ENCODE measurements at regions of chr10 and their contacts with region 1.

Region 1: GRCh38 chr10:32445740-32446535 is at the start of gene CCDC7:
- DNase-seq: peak; percentile 78 to 90 (median 88)
- ATAC-seq: peak; percentile 98
- H3K4me3 ChIP-seq: peak within 1 kb of the TSS; percentile 79
- H3K4me3 Mint-ChIP-seq: peak within 1 kb of the TSS; percentile 85 to 98 (median 94)
- H3K27ac ChIP-seq: peak within 1 kb of the TSS; percentile 95
- H3K27ac Mint-ChIP-seq: peak within 1 kb of the TSS; percentile 96 to 100 (median 99)
- H3K4me1 ChIP-seq: peaks cover 8 to 9% of the 10 kb centered on the region in 2 donors
- H3K4me1 Mint-ChIP-seq: peaks cover 2 to 35% (median 25%) of the 10 kb centered on the region in 7 donors
- H3K27me3 ChIP-seq: no peaks in the 10 kb centered on the region
- H3K27me3 Mint-ChIP-seq: peaks cover 0 to 4% (median 0%) of the 10 kb centered on the region in 5 donors
- total RNA-seq, gene CCDC7: 19.5 to 98.7 (median 69.5) TPM

Region 2: GRCh38 chr10:31031558-31032257 is 1414.2 kb before region 1 on chr10 and contains the start of gene ZNF438:
- CTCF ChIA-PET with region 1: no interaction called
- POLR2A ChIA-PET with region 1: no interaction called
- intact Hi-C with region 1: loop called in 1 of 2 experiments (anchors 5 kb)
- DNase-seq: peak; percentile 93 to 99 (median 96)
- ATAC-seq: peak; percentile 92
- H3K4me3 ChIP-seq: peak within 1 kb of the TSS; percentile 84
- H3K4me3 Mint-ChIP-seq: peak within 1 kb of the TSS; percentile 89 to 94 (median 92)
- H3K27ac ChIP-seq: peak within 1 kb of the TSS; percentile 96
- H3K27ac Mint-ChIP-seq: peak within 1 kb of the TSS; percentile 93 to 99 (median 99)
- H3K4me1 ChIP-seq: peaks cover 5% of the 10 kb centered on the region in 2 donors
- H3K4me1 Mint-ChIP-seq: peaks cover 7 to 34% (median 14%) of the 10 kb centered on the region in 7 donors
- H3K27me3 ChIP-seq: no peaks in the 10 kb centered on the region
- H3K27me3 Mint-ChIP-seq: no peaks in the 10 kb centered on the region
- total RNA-seq, gene ZNF438: 3.9 to 5.8 (median 4.0) TPM

Region 3: DNA sequence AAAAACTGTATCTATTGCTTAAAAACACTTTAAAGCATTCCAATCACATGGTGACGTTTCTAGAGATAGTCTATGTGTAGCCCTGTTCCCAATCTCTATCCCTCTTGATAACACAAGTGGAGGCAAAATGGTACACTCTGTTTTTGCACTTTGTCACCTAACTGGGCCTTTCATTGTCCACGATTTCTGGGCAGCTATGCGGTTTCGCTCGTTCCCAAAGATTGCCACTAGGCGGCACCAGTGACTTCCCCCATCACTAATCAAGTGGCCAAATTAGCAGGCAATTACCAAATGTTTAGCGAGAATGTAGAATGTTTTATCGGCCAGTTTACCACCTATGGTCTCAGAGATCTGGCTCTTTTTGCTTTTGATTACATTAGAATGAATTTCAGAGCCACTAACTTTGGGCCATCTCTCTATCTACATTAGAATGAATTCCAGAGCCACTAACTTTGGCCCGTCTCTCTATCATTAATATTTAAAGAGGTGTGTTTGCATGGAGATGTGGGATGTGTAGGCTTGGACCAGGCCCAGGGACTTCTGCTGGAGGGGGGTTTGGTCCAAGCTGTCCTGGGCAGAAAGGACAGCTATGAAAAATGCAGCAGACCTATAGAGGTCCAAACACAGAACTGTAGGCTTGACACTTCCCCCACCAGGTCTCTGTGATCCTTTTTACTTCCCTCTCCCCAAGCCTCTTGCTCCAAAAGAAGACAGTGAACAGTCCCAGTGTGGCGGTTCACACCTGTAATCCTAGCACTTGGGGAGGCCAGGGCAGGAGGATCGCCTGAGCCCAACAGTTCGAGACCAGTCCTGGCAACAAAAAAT is 189.1 kb before region 1 on chr10:
- CTCF ChIA-PET with region 1: no interaction called
- POLR2A ChIA-PET with region 1: no interaction called
- intact Hi-C with region 1: loop called (anchors 2 to 5 kb)
- DNase-seq: peak; percentile 31 to 67 (median 57)
- ATAC-seq: peak; percentile 89
- H3K4me3 ChIP-seq: no peak overlapping the region
- H3K4me3 Mint-ChIP-seq: peak overlapping the region in 1 of 10 donors; percentile 60
- H3K27ac ChIP-seq: no peak overlapping the region
- H3K27ac Mint-ChIP-seq: peak overlapping the region in 1 of 9 donors; percentile 51
- H3K4me1 ChIP-seq: peaks cover 0 to 5% of the 10 kb centered on the region in 2 donors
- H3K4me1 Mint-ChIP-seq: peaks cover 1 to 13% (median 5%) of the 10 kb centered on the region in 7 donors
- H3K27me3 ChIP-seq: no peaks in the 10 kb centered on the region
- H3K27me3 Mint-ChIP-seq: no peaks in the 10 kb centered on the region

Region 4: GRCh38 chr10:32459051-32459698 is 13.2 kb after region 1 on chr10:
- CTCF ChIA-PET with region 1: interaction called, 9 read pairs
- POLR2A ChIA-PET with region 1: interaction called, 17 read pairs
- intact Hi-C with region 1: loop called (anchors 1 kb)
- DNase-seq: peak in 7 of 9 donors; percentile 76 to 90 (median 87)
- ATAC-seq: peak; percentile 100
- H3K4me3 ChIP-seq: peak overlapping the region; percentile 34
- H3K4me3 Mint-ChIP-seq: peak overlapping the region; percentile 48 to 79 (median 68)
- H3K27ac ChIP-seq: peak overlapping the region; percentile 43
- H3K27ac Mint-ChIP-seq: peak overlapping the region; percentile 73 to 92 (median 85)
- H3K4me1 ChIP-seq: peaks cover 31 to 35% of the 10 kb centered on the region in 2 donors
- H3K4me1 Mint-ChIP-seq: peaks cover 20 to 69% (median 61%) of the 10 kb centered on the region in 7 donors
- H3K27me3 ChIP-seq: no peaks in the 10 kb centered on the region
- H3K27me3 Mint-ChIP-seq: no peaks in the 10 kb centered on the region

Region 5: GRCh38 chr10:32958085-32959005 is 512.4 kb after region 1 on chr10 and contains the start of gene ITGB1:
- CTCF ChIA-PET with region 1: no interaction called
- POLR2A ChIA-PET with region 1: interaction called, 3 read pairs
- intact Hi-C with region 1: loop called (anchors 1 kb)
- DNase-seq: peak; percentile 73 to 91 (median 82)
- ATAC-seq: peak; percentile 95
- H3K4me3 ChIP-seq: peak within 1 kb of the TSS; percentile 88
- H3K4me3 Mint-ChIP-seq: peak within 1 kb of the TSS; percentile 78 to 95 (median 88)
- H3K27ac ChIP-seq: peak within 1 kb of the TSS; percentile 68
- H3K27ac Mint-ChIP-seq: peak within 1 kb of the TSS; percentile 74 to 90 (median 82)
- H3K4me1 ChIP-seq: peaks cover 7 to 8% of the 10 kb centered on the region in 2 donors
- H3K4me1 Mint-ChIP-seq: peaks cover 29 to 60% (median 54%) of the 10 kb centered on the region in 7 donors
- H3K27me3 ChIP-seq: no peaks in the 10 kb centered on the region
- H3K27me3 Mint-ChIP-seq: peaks cover 0 to 13% (median 0%) of the 10 kb centered on the region in 5 donors
- total RNA-seq, gene ITGB1: 43.2 to 205 (median 60.8) TPM

Region 6: DNA sequence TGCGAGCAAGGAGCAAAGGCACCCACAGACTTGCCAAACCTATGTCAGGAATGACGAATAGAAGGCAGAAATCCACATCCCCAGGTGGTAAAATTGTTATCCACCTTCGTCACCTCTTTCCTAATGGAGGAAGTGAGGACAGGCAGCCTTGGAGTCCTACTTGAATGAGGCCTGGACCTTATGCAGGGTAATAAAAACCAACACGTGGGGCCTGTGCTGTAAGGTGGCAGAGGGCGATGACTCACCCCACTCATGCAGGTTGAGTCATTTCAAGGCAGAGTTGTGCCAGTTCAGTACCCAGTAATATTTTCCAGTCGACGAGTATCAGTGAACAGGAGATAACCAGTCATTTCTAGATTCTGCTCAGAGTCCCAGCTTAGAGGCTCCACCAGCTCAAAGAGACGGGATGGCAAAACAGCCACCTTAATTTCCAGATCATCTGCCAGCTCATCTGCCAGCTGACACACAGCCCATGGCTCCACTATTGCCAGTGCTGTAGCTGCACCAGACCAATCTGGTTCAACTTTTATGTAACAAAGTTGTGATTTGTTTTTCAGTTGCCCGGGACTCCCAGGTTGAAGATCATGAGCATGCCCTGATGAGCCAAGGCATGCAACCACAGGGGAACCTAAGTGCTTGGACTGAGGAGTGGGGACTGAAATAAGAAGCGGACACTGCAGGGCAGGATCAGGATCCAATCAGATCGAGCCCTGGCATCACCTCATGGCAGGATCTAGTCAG is 688.2 kb after region 1 on chr10:
- CTCF ChIA-PET with region 1: interaction called, 3 read pairs
- POLR2A ChIA-PET with region 1: no interaction called
- intact Hi-C with region 1: loop called (anchors 5 kb)
- DNase-seq: peak in 2 of 9 donors; percentile 61 to 64
- ATAC-seq: peak; percentile 58
- H3K4me3 ChIP-seq: no peak overlapping the region
- H3K4me3 Mint-ChIP-seq: peak overlapping the region in 2 of 10 donors; percentile 27 to 50
- H3K27ac ChIP-seq: no peak overlapping the region
- H3K27ac Mint-ChIP-seq: peak overlapping the region in 8 of 9 donors; percentile 54 to 95 (median 82)
- H3K4me1 ChIP-seq: peaks cover 35 to 85% of the 10 kb centered on the region in 2 donors
- H3K4me1 Mint-ChIP-seq: peaks cover 25 to 78% (median 57%) of the 10 kb centered on the region in 7 donors
- H3K27me3 ChIP-seq: no peaks in the 10 kb centered on the region
- H3K27me3 Mint-ChIP-seq: no peaks in the 10 kb centered on the region

Region 7: GRCh38 chr10:33248638-33249037 is 802.7 kb after region 1 on chr10:
- CTCF ChIA-PET with region 1: no interaction called
- POLR2A ChIA-PET with region 1: no interaction called
- intact Hi-C with region 1: loop called in 1 of 2 experiments (anchors 5 kb)
- DNase-seq: peak in 8 of 9 donors; percentile 38 to 86 (median 76)
- ATAC-seq: peak; percentile 97
- H3K4me3 ChIP-seq: peak overlapping the region; percentile 21
- H3K4me3 Mint-ChIP-seq: peak overlapping the region; percentile 60 to 89 (median 78)
- H3K27ac ChIP-seq: no peak overlapping the region
- H3K27ac Mint-ChIP-seq: peak overlapping the region; percentile 70 to 94 (median 87)
- H3K4me1 ChIP-seq: peaks cover 21 to 29% of the 10 kb centered on the region in 2 donors
- H3K4me1 Mint-ChIP-seq: peaks cover 28 to 80% (median 64%) of the 10 kb centered on the region in 7 donors
- H3K27me3 ChIP-seq: no peaks in the 10 kb centered on the region
- H3K27me3 Mint-ChIP-seq: peaks cover 0 to 43% (median 0%) of the 10 kb centered on the region in 5 donors